AG04450 (cell line): ENCODE measurements at regions of chr3 and their contacts with region 1.

Region 1: DNA sequence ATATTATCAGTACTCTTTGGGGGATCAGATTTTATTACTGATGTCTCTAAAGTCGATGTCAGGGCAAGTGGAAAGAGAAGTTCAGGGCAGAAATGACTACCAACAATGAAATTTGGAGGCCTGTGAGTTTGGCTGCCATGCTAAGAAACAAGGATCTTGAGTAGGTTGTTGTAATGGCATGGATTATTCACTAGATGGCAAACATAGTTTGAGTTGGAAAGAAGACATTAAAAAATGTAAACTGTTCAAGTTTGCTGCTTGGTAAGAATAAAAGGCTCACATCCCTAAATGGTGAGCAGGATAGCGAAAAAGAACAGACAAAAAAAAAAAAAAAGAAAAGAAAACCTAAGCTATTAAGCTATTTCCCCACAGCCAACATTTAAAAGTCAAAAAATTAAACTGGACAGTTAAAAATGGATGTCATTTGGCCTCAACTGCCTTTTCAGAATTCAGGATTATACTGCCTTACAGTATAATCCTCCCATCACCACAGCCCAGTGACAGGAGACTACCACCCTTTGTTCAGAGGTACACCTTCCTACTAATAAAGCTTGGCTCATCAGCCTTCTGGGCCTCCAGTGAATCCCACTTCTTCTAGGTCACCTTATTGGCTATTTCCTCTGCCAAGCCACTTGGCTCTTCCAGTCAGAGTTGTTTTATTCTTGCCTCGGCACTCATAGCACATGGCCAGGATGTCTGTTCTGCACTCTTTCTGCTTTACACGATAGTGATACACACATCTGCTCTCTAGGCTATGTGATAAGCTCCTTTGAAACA is 163.7 kb downstream of the PLD1 start:
- DNase-seq: peak; percentile 45
- H3K4me3 ChIP-seq: no peak overlapping the region
- H3K27ac ChIP-seq: peak overlapping the region; percentile 2
- H3K27me3 ChIP-seq: no peaks in the 10 kb centered on the region
- CTCF ChIP-seq: peak; percentile 74

Region 2: DNA sequence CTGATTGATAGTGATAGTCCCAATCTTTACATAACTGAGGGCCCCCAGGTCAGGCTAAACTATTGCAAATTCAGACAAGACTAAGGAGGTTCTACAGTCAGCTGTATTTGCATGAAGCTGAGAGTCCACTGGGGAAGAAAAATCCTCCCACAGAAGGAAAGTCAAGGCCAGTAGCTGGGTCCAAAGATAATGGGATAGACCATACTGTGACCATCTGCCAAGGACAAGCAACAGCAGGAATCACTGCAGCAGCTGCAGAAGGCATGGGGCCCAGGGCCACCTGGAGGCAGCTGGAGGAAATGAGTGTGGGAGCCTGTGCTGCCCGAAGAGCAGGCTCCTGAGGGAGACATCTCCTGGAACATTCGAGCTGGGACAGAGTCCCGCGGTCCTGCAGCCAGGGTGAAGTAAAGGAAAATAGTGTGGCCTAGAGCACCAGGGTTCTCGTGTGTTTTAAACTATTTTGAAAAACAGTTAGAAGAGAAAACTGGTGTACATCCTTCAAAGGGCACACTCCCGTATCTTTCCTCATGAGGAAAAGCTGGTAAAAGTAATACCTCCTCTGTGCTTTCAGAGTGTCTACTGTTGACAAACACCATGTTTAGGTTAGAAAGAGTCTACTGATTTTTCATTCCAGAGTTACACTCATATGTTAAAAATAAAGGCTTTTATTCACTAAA is 183.4 kb after region 1 on chr3:
- CTCF ChIA-PET with region 1: interaction called, 26 read pairs
- POLR2A ChIA-PET with region 1: interaction called, 7 read pairs
- DNase-seq: no peak
- H3K4me3 ChIP-seq: no peak overlapping the region
- H3K27ac ChIP-seq: no peak overlapping the region
- H3K27me3 ChIP-seq: no peaks in the 10 kb centered on the region
- CTCF ChIP-seq: peak; percentile 76

Region 3: GRCh38 chr3:172054115-172054764 is 407.7 kb after region 1 on chr3:
- CTCF ChIA-PET with region 1: no interaction called
- POLR2A ChIA-PET with region 1: interaction called, 13 read pairs
- DNase-seq: no peak
- H3K4me3 ChIP-seq: no peak overlapping the region
- H3K27ac ChIP-seq: peak overlapping the region; percentile 24
- H3K27me3 ChIP-seq: no peaks in the 10 kb centered on the region
- CTCF ChIP-seq: no peak

Region 4: DNA sequence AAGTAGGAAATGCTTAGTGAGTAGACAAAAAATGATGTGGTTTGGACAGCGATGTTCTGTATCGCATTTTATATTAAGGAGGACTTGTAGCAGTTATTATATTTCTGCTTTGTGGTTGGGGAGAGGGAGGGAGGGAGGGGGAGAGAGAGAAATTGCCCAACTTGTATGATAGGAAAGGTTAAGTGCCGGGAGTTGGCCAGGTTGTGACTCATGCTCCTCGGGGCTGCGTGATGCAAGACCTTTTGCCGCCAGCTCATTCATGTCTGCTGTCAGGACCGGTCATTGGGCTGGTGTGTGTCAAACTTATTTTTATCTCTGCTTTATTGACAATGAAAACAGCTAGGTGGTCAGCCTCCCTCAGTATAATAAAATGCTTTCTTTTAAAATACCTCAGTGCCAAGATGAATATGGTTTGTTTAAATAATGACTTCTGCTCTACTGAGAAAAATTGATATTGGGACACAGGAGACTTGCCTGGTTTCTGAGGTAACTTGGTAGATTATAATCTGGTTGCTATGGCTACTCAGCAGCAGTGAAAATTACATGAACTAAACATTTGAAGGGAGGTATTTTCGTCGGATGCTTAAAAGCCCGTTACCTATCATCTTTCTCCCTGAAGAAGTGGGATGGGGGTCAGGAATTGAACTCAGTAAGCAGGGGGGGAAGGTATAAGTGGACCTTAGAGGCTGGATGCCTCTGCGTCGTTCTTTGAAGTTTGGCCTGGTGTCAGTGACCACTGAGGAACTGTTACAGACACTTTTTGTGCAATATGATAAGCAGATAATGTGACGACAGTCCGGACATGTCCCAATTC is 483.5 kb after region 1 on chr3:
- CTCF ChIA-PET with region 1: no interaction called
- POLR2A ChIA-PET with region 1: no interaction called
- DNase-seq: peak; percentile 96
- H3K4me3 ChIP-seq: no peak overlapping the region
- H3K27ac ChIP-seq: peak overlapping the region; percentile 86
- H3K27me3 ChIP-seq: no peaks in the 10 kb centered on the region
- CTCF ChIP-seq: no peak